ENCODE measurements at regions of chr9 and their contacts with region 1.

Region 1: GRCh38 chr9:109903515-109904138 is 123.6 kb downstream of the PALM2AKAP2 start:
- DNase-seq: no peak
- ATAC-seq: peak; percentile 64
- H3K4me3 ChIP-seq: no peak overlapping the region
- H3K27ac ChIP-seq: no peak overlapping the region
- H3K4me1 ChIP-seq: peaks cover 25% of the 10 kb centered on the region
- H3K27me3 ChIP-seq: no peaks in the 10 kb centered on the region
- CTCF ChIP-seq: peak; percentile 75 to 94 (median 91); a peak in 5 of 6 replicates
- EP300 ChIP-seq: no peak
- POLR2A ChIP-seq: no peak
- RAD21 ChIP-seq: peak; percentile 100

Region 2: DNA sequence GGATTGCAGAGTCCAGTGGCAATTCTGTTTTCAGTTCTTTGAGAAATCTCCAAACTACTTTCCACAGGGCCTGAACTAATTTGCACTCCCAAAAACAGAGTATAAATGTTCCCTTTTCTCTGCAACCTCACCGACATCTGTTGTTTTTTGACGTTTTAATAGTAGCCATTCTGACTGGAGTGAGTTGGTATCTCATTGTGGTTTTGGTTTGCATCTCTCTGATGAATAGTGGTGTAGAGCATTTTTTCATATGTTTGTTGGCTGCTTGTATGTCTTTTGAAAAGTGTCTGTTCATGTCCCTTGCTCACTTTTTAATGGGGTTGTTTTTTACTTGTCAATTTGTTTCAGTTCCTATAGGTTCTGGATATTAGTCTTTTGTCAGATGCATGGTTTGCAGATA is 51.1 kb before region 1 on chr9:
- CTCF ChIA-PET with region 1: no interaction called
- POLR2A ChIA-PET with region 1: no interaction called
- RAD21 ChIA-PET with region 1: no interaction called
- SMC1A ChIA-PET with region 1: no interaction called
- in situ Hi-C with region 1: no loop called
- intact Hi-C with region 1: no loop called
- DNase-seq: no peak
- ATAC-seq: no peak
- H3K4me3 ChIP-seq: no peak overlapping the region
- H3K27ac ChIP-seq: no peak overlapping the region
- H3K4me1 ChIP-seq: no peaks in the 10 kb centered on the region
- H3K27me3 ChIP-seq: no peaks in the 10 kb centered on the region; a peak in 1 of 4 replicates
- CTCF ChIP-seq: no peak
- EP300 ChIP-seq: no peak
- POLR2A ChIP-seq: no peak
- RAD21 ChIP-seq: no peak

Region 3: DNA sequence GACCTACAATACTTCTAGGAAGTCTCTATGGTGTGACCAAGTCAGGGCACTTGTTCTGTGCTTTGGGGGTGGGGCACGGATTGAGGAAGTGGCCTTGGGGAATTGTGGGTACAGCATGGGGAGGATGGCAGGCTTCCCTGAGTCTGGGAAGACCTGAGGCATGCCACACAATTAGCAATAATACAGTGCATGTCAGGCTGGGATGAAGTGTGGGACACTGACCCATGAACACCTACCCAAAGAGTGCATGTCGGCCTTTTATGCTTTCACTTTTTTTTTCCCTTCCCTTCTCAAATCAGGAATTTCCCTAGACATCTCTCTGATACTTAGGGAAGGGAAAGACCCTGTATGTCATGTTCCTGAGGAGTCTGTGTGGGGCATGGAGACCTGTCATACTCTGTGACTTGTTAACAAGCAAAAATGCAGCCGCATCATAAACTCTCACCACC is 22.8 kb after region 1 on chr9:
- CTCF ChIA-PET with region 1: interaction called, 3 read pairs
- POLR2A ChIA-PET with region 1: no interaction called
- RAD21 ChIA-PET with region 1: no interaction called
- SMC1A ChIA-PET with region 1: interaction called, 11 read pairs
- in situ Hi-C with region 1: no loop called
- intact Hi-C with region 1: no loop called
- DNase-seq: no peak
- ATAC-seq: peak; percentile 66
- H3K4me3 ChIP-seq: peak overlapping the region; percentile 8; the same call in 1 of the 2 replicates
- H3K27ac ChIP-seq: peak overlapping the region; percentile 45
- H3K4me1 ChIP-seq: peaks cover 10% of the 10 kb centered on the region
- H3K27me3 ChIP-seq: no peaks in the 10 kb centered on the region
- CTCF ChIP-seq: no peak
- EP300 ChIP-seq: no peak; a peak in 1 of 4 replicates
- POLR2A ChIP-seq: no peak
- RAD21 ChIP-seq: no peak

Region 4: DNA sequence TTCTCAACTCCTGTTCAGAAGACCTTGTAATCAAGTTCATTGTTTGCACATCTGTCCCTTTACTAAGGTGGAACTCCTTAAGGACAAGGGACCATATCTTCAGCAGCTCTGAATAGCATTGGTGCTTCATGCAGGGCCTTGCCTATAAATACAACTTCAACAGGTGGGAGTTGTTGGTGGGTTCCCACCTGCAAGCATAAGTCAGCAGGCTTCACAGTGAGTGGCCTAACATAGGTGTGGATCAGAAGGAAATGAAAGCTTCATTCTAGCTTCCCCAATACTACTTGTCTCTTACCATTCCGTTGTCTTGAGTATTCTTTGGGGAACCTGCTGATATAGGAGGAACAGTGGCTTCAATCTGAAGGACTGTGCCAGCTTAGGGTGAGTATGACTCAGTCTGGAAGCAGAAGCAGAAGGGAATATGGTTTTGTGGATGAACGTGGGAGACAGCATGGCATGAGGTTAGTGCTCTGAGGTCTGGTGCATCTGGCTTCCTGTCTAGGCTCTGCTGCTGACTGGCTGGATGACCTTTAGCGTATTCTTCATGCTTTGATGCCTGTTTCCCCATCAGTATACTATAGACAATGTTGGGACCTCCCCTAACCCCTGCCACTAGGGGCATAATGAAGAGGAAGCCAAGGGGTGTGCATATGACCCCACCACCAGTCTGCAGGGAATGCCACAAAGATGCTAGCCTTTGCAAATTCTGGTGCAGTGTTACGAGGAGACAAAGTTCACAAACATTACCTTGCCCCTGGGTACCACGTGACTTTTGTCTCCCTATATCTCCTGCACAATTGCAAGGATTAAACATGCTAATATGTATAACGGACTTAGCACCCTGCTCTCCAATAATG is 68.6 kb after region 1 on chr9:
- CTCF ChIA-PET with region 1: interaction called, 102 read pairs
- POLR2A ChIA-PET with region 1: interaction called, 27 read pairs
- RAD21 ChIA-PET with region 1: interaction called, 133 read pairs
- SMC1A ChIA-PET with region 1: interaction called, 423 read pairs
- in situ Hi-C with region 1: no loop called
- intact Hi-C with region 1: loop called (anchors 1 kb)
- DNase-seq: peak; percentile 91
- ATAC-seq: peak; percentile 44
- H3K4me3 ChIP-seq: no peak overlapping the region
- H3K27ac ChIP-seq: peak overlapping the region; percentile 92
- H3K4me1 ChIP-seq: peaks cover 87% of the 10 kb centered on the region
- H3K27me3 ChIP-seq: no peaks in the 10 kb centered on the region
- CTCF ChIP-seq: peak; percentile 22 to 53 (median 42); a peak in 5 of 6 replicates
- EP300 ChIP-seq: no peak
- POLR2A ChIP-seq: peak; percentile 42
- RAD21 ChIP-seq: peak; percentile 41; the same call in 1 of the 2 replicates

Region 5: DNA sequence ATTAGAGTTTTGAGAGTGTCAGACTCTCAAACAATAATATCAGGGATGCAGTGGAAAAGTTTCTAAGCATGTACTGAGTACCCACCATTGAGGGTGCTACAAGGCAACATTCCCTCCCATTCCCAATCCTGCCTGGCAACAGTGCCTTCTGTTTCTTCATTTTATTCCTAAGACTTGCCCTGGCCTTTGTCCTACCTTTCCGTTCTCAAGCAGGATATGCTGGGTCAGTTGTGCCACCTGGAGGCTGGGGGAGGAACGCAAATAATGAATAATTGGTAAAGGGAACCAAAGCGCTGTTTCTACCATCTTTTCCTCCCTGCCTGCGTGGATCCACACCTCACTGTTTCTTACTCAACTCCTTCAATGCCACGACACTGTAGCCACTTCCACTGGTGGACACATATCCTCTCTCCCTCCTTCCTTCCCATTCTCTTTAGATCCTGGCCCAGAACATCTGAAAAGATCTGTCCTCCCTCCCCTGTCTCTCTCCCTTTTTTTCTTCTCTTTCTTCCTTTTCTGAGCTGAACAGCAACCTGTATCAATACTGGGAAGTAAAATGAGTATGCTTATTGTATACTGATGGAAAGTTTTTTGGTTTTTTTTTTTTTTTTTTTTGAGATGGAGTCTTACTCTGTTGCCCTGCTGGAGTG is 154.8 kb after region 1 on chr9:
- CTCF ChIA-PET with region 1: interaction called, 537 read pairs
- POLR2A ChIA-PET with region 1: interaction called, 19 read pairs
- RAD21 ChIA-PET with region 1: interaction called, 309 read pairs
- SMC1A ChIA-PET with region 1: interaction called, 636 read pairs
- in situ Hi-C with region 1: loop called (anchors 5 kb)
- intact Hi-C with region 1: loop called (anchors 1 kb)
- DNase-seq: no peak
- ATAC-seq: peak; percentile 83
- H3K4me3 ChIP-seq: peak overlapping the region; percentile 30; the same call in 1 of the 2 replicates
- H3K27ac ChIP-seq: no peak overlapping the region; the same call in 1 of the 2 replicates
- H3K4me1 ChIP-seq: peaks cover 19% of the 10 kb centered on the region
- H3K27me3 ChIP-seq: no peaks in the 10 kb centered on the region
- CTCF ChIP-seq: peak; percentile 63 to 74 (median 72)
- EP300 ChIP-seq: no peak
- POLR2A ChIP-seq: no peak
- RAD21 ChIP-seq: peak; percentile 98

Region 6: GRCh38 chr9:110125207-110125751 is 221.7 kb after region 1 on chr9:
- CTCF ChIA-PET with region 1: interaction called, 19 read pairs
- POLR2A ChIA-PET with region 1: interaction called, 7 read pairs
- RAD21 ChIA-PET with region 1: interaction called, 28 read pairs
- SMC1A ChIA-PET with region 1: interaction called, 101 read pairs
- in situ Hi-C with region 1: no loop called
- intact Hi-C with region 1: no loop called
- DNase-seq: no peak
- ATAC-seq: no peak
- H3K4me3 ChIP-seq: no peak overlapping the region
- H3K27ac ChIP-seq: peak overlapping the region; percentile 29
- H3K4me1 ChIP-seq: peaks cover 58% of the 10 kb centered on the region
- H3K27me3 ChIP-seq: no peaks in the 10 kb centered on the region
- CTCF ChIP-seq: no peak
- EP300 ChIP-seq: no peak
- POLR2A ChIP-seq: no peak
- RAD21 ChIP-seq: no peak

Region 7: GRCh38 chr9:110152704-110153374 is 249.2 kb after region 1 on chr9:
- CTCF ChIA-PET with region 1: interaction called, 597 read pairs
- POLR2A ChIA-PET with region 1: interaction called, 7 read pairs
- RAD21 ChIA-PET with region 1: interaction called, 424 read pairs
- SMC1A ChIA-PET with region 1: interaction called, 406 read pairs
- in situ Hi-C with region 1: loop called (anchors 5 kb)
- intact Hi-C with region 1: loop called (anchors 1 kb)
- DNase-seq: no peak
- ATAC-seq: peak; percentile 23
- H3K4me3 ChIP-seq: 0 out of 2 replicates have a peak overlapping the region, but pooled peaks have one; percentile 17
- H3K27ac ChIP-seq: no peak overlapping the region
- H3K4me1 ChIP-seq: peaks cover 57% of the 10 kb centered on the region
- H3K27me3 ChIP-seq: no peaks in the 10 kb centered on the region
- CTCF ChIP-seq: peak; percentile 68 to 83 (median 78); a peak in 5 of 6 replicates
- EP300 ChIP-seq: no peak
- POLR2A ChIP-seq: no peak; the same call in none of the 2 replicates
- RAD21 ChIP-seq: peak; percentile 96

Region 8: DNA sequence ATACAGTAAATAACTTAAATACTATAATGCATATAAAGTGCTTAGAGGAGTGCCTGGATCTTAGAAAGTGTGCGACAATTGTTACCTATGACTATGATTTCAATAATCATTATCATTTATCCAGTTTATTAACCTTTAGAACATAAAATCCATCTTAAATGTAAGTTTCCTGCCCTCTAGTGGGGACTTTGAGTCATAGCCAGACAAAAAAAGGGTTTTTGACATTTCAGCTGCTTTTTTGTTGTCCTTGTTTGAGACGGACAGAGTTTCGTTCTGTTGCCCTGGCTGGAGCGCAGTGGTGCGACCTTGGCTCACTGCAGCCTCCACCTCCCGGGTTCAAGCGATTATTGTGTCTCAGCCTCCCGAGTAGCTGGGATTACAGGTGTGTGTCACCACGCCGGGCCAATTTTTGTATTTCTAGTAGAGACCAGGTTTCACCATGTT is 314.1 kb after region 1 on chr9:
- CTCF ChIA-PET with region 1: interaction called, 114 read pairs
- POLR2A ChIA-PET with region 1: no interaction called
- RAD21 ChIA-PET with region 1: interaction called, 11 read pairs
- SMC1A ChIA-PET with region 1: interaction called, 15 read pairs
- in situ Hi-C with region 1: no loop called
- intact Hi-C with region 1: loop called (anchors 2 kb)
- DNase-seq: no peak
- ATAC-seq: peak; percentile 34
- H3K4me3 ChIP-seq: no peak overlapping the region
- H3K27ac ChIP-seq: no peak overlapping the region
- H3K4me1 ChIP-seq: no peaks in the 10 kb centered on the region
- H3K27me3 ChIP-seq: no peaks in the 10 kb centered on the region
- CTCF ChIP-seq: peak; percentile 61 to 72 (median 65)
- EP300 ChIP-seq: no peak
- POLR2A ChIP-seq: no peak
- RAD21 ChIP-seq: peak; percentile 69